ENCODE measurements at regions of chr16 and their contacts with region 1.

Region 1: DNA sequence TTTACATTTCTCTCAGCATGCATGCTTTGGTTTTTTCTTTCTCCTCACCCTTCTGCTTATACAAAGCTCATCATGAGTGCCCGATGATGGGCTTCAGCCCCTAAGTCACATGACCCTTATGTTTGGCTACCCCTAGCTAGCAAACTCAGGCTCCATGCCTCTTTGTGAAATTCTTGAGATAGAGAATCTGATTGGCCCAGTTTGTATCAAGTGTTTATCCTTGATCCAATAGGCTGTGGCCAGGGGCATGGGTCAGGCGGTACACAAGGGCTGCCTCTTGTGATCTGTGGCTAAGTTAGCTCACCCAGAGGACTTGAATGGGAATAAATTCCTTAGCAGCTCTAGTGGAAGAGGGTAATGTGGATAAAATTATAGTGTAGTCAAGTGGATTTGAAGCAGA is 11.5 kb upstream of the TOX3 start:
- DNase-seq: no peak
- H3K4me3 ChIP-seq: no peak overlapping the region
- H3K27ac ChIP-seq: peak overlapping the region; percentile 81 to 83 (median 81)
- H3K4me1 ChIP-seq: peaks cover 2 to 76% (median 38%) of the 10 kb centered on the region in 4 donors
- H3K27me3 ChIP-seq: no peaks in the 10 kb centered on the region
- CTCF ChIP-seq: no peak
- EP300 ChIP-seq: no peak
- POLR2A ChIP-seq: no peak

Region 2: GRCh38 chr16:52597580-52598483 is 39.4 kb after region 1 on chr16:
- in situ Hi-C with region 1: no loop called
- intact Hi-C with region 1: no loop called
- DNase-seq: peak; percentile 34
- H3K4me3 ChIP-seq: no peak overlapping the region
- H3K27ac ChIP-seq: peak overlapping the region in 1 of 4 donors; percentile 47
- H3K4me1 ChIP-seq: peaks cover 0 to 9% (median 4%) of the 10 kb centered on the region in 4 donors
- H3K27me3 ChIP-seq: no peaks in the 10 kb centered on the region
- CTCF ChIP-seq: no peak
- EP300 ChIP-seq: no peak
- POLR2A ChIP-seq: no peak

Region 3: GRCh38 chr16:52747078-52747595 is 188.7 kb after region 1 on chr16:
- in situ Hi-C with region 1: no loop called
- intact Hi-C with region 1: loop called (anchors 2 kb)
- DNase-seq: no peak
- H3K4me3 ChIP-seq: no peak overlapping the region
- H3K27ac ChIP-seq: no peak overlapping the region
- H3K4me1 ChIP-seq: no peaks in the 10 kb centered on the region
- H3K27me3 ChIP-seq: no peaks in the 10 kb centered on the region
- CTCF ChIP-seq: no peak
- EP300 ChIP-seq: no peak
- POLR2A ChIP-seq: no peak